Endothelial cell of umbilical vein (primary cell): ENCODE measurements at regions of chr9 and their contacts with region 1.

Region 1: GRCh38 chr9:85569988-85570387 is 171.8 kb downstream of the AGTPBP1 start:
- DNase-seq: peak; percentile 4
- H3K4me3 ChIP-seq: no peak overlapping the region
- H3K27ac ChIP-seq: no peak overlapping the region
- H3K4me1 ChIP-seq: no peaks in the 10 kb centered on the region
- H3K27me3 ChIP-seq: no peaks in the 10 kb centered on the region
- CTCF ChIP-seq: no peak
- POLR2A ChIP-seq: no peak

Region 2: DNA sequence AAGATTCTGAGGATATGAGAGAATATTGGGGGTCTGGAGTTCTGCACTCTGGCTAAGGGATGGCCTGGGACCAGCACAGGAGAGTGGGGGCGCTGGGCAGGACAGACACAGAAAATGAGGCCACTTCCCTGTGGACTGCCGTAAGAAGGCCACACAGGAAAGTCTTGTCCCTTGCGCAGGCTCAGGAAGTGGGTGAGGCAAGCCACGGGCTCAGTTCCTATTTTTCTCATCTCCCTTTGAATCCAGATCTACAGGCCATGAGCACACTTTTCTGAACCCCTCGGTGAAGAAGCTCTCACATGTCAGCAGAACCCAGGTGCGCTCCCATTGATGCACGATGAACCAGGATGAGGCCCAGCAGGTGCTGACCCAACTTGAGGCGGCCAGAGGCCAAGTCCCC is 35.6 kb before region 1 on chr9:
- CTCF ChIA-PET with region 1: interaction called, 3 read pairs
- POLR2A ChIA-PET with region 1: no interaction called
- dilution Hi-C with region 1: no loop called
- intact Hi-C with region 1: loop called (anchors 5 kb)
- DNase-seq: no peak
- H3K4me3 ChIP-seq: no peak overlapping the region
- H3K27ac ChIP-seq: no peak overlapping the region
- H3K4me1 ChIP-seq: peaks cover 4% of the 10 kb centered on the region
- H3K27me3 ChIP-seq: no peaks in the 10 kb centered on the region
- CTCF ChIP-seq: no peak
- POLR2A ChIP-seq: no peak